Posterior cingulate gyrus (tissue), 11 donors: ENCODE measurements at regions of chr3 and their contacts with region 1.

Region 1: GRCh38 chr3:57755668-57756527 is at the start of gene SLMAP:
- DNase-seq: peak; percentile 95 to 99 (median 98)

Region 2: DNA sequence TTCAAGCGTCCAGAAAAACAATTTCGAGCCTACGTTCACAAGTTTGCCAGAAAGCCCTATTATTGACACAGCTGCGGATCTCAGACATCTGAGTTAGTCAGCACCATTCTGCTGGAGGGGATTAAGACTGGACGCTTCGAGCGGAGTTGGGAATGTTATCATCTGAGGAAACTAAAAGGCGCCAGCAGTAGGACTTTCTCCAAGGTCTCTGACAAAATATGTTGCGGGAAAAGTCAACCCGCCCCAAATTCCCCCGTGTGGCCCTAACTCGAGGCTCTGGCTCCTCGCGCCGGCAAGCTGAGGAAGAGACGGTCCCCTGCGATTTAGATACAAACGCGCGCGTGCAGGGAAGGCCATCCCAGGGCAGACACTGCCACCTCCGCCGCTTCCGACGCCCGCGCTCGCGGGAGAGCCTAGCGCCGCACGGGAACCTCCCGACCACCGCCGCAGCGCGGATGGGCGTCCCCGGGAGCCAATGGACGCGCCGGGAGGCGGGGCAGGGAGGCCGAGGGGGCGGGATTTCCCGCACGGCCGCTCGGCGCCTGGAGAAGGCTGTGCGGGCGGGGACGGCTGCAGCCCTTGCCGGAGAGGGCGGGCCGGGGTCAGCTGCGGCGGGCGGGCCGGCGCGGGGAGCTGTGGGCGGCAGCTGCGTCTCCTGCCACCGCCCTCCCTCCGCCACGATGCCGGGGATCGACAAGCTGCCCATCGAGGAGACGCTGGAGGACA is 528.5 kb before region 1 on chr3 and contains the start of gene APPL1:
- intact Hi-C with region 1: loop called (anchors 5 kb)
- DNase-seq: peak; percentile 88 to 99 (median 92)

Region 3: GRCh38 chr3:57692259-57693147 is 63.4 kb before region 1 on chr3 and contains the start of gene DENND6A:
- intact Hi-C with region 1: loop called (anchors 1 kb)
- DNase-seq: peak; percentile 65 to 99 (median 95)

Region 4: GRCh38 chr3:57778494-57778893 is 22.6 kb after region 1 on chr3:
- intact Hi-C with region 1: no loop called
- DNase-seq: no peak